ENCODE measurements at regions of chr6 and their contacts with region 1.

Region 1: DNA sequence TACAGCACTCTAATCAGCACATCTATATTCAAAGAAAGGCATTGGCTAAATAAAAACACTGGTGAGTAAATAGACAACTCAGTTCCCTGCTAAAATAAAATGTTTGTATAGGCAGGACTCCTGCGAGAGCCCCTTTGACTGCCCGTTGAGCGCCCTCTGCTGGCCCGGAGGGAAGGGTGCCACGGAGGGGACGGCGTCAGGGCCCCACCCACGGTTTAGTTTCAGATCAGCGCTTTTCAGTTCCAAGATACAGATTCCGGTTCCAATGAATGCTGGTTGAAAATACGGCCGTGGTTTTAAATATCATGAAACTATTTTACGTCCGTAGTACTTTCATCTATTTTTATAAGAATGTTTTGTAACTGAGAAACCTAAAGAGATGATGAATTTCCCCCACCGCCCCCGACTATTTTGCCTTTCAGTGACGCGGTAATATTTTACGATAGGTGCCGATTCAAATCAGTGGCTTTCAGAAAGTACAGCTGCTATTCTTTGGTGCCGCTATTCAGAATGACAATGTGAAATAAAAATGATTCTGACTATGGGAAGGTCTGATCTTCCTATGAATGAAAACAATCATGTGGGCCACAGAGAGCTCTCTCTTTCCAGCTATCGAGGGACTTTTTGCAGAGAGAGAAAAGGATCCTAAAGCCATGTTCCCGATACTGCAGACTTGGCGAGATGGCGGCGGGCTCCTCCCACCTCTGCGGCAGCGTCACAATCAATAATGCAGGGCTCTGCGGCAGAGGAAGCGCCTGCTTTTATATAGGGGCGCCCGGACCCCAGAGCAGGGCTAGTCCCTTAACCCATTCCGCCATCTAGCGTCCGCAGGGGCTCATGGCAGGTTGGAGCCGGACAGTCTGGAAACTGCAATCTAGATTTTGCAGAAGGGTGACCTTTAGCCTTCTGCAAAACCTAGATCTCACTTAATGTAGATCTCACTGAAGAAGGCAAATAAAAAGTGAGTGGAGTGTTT is 10.6 kb upstream of the CCN6 start:
- DNase-seq: peak; percentile 97
- H3K4me3 ChIP-seq: peak overlapping the region; percentile 53 to 65 (median 58)
- H3K27ac ChIP-seq: peak overlapping the region; percentile 73 to 82 (median 75)
- H3K4me1 ChIP-seq: peaks cover 9 to 22% (median 19%) of the 10 kb centered on the region in 4 donors
- H3K27me3 ChIP-seq: no peaks in the 10 kb centered on the region
- CTCF ChIP-seq: peak; percentile 88 to 95 (median 93)
- EP300 ChIP-seq: no peak
- POLR2A ChIP-seq: no peak

Region 2: GRCh38 chr6:111265842-111266241 is 777.5 kb before region 1 on chr6:
- intact Hi-C with region 1: no loop called
- DNase-seq: no peak
- H3K4me3 ChIP-seq: no peak overlapping the region
- H3K27ac ChIP-seq: no peak overlapping the region
- H3K4me1 ChIP-seq: peaks cover 0 to 24% (median 4%) of the 10 kb centered on the region in 4 donors
- H3K27me3 ChIP-seq: no peaks in the 10 kb centered on the region
- CTCF ChIP-seq: no peak
- EP300 ChIP-seq: no peak
- POLR2A ChIP-seq: no peak

Region 3: DNA sequence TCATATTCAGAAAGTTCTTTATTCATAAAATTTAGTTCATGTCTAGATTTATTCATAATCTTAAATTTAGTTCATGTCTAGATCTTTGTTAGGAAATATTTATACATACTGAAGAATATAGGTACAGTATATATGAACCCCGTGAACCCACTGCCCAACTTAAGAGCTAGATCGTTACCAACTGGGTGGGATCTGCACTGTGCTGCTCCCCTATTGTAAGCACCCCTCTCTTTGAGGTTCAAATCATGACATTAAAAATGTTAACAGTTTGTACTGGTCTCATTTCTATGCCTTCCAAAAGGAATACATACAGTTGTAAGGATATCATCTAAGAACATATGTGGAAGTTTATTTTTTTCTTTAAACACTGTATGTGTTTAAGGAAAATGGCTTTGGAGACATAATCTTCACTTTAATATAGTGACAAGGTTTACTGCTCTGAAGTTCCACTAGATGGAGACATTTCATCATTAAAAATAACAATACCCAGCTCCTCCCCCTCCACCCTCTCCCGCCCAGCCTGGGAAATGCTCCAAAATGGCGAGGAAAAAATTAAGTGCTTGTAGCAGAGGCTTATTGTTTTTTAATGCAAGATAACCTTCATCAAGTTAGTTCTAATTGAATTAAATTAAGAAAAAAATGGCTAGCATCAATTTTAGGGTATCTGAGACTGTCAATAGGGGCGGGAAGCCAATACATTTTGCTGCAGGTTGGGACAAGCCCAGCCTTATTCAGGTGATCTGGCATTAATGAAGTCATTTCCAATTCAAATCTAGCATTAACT is 333.5 kb before region 1 on chr6:
- intact Hi-C with region 1: loop called (anchors 2 kb)
- DNase-seq: no peak
- H3K4me3 ChIP-seq: peak overlapping the region in 2 of 4 donors; percentile 17 to 27
- H3K27ac ChIP-seq: peak overlapping the region in 1 of 4 donors; percentile 14
- H3K4me1 ChIP-seq: peaks cover 28 to 32% (median 32%) of the 10 kb centered on the region in 4 donors
- H3K27me3 ChIP-seq: no peaks in the 10 kb centered on the region
- CTCF ChIP-seq: peak; percentile 78 to 92 (median 79)
- EP300 ChIP-seq: no peak
- POLR2A ChIP-seq: no peak

Region 4: DNA sequence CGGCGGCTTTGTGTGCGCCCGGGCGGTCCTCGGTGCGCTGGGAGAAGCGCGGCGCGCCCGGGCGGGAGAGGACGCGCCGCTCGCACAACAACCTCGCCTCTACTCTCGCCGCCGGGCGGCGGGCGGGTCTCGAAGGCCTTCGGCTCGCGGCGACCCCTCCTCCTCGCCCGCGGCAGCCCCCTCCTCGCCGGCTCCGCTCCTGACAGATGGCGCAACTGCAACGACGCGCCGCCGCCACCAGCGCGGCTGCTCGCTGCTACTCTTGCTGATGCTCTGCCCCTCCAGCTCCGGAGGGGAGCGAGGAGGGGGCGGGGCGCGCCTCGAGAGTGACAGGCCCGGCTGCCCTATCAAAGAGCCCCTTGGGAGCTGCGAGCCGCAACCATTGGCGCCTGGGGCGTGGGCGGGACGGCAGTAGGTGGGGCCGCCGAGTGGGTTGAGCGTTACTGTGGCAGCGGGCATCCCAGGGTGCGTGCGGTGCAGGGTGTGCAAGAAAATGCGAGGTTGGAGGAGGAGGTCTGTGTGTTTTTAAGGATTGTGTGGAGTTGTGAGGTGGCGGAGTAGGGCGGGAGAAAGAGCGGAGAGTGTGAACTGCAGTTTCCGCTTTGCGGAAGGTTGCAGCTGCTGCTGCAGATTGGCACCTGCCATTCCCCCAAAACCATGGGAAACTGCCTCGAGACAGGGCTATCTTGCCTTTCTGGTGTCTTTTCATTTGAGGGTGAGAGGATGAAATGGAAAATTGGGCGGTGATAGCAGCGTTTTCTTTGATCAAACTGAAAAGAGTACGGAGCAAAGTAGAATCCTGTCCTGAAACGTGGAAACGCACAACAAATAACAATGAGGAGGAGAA is 169.9 kb before region 1 on chr6 and contains the start of gene FYN:
- intact Hi-C with region 1: loop called (anchors 5 kb)
- DNase-seq: peak; percentile 99
- H3K4me3 ChIP-seq: peak within 1 kb of the TSS; percentile 71 to 84 (median 73)
- H3K27ac ChIP-seq: peak within 1 kb of the TSS; percentile 68 to 84 (median 80)
- H3K4me1 ChIP-seq: peaks cover 3 to 29% (median 24%) of the 10 kb centered on the region in 4 donors
- H3K27me3 ChIP-seq: peaks cover 0 to 14% (median 0%) of the 10 kb centered on the region in 4 donors
- CTCF ChIP-seq: peak; percentile 31 to 66 (median 41)
- EP300 ChIP-seq: no peak
- POLR2A ChIP-seq: peak; percentile 59
- total RNA-seq, gene FYN: 37.8 to 65.8 (median 53.8) TPM

Region 5: DNA sequence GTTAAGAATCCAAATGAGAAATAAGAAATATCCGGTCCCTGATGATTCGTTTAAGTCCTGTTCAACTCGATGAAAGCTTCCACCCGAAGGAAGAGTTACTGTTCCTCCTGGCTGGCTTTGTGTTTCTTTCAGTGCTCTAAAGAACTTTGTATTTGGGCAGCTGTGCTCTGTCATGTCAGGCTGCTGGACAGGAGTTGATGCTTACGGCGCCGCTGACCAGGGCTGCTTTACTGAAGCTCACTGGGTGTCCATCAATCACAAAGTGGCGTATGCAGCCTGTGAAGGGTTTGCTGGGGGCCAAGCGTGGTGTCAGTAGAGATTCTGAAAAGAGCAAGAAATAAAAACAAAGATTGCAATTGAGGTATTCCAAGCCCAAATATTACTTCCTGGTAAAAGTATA is 65.9 kb after region 1 on chr6:
- intact Hi-C with region 1: no loop called
- DNase-seq: no peak
- H3K4me3 ChIP-seq: no peak overlapping the region
- H3K27ac ChIP-seq: peak overlapping the region in 3 of 4 donors; percentile 5 to 34 (median 20)
- H3K4me1 ChIP-seq: peaks cover 10 to 22% (median 11%) of the 10 kb centered on the region in 4 donors
- H3K27me3 ChIP-seq: no peaks in the 10 kb centered on the region
- CTCF ChIP-seq: no peak
- EP300 ChIP-seq: no peak
- POLR2A ChIP-seq: no peak